Panc1 (cell line): ENCODE measurements at regions of chr9 and their contacts with region 1.

Region 1: GRCh38 chr9:107172160-107172978 is 110.7 kb upstream of the RAD23B start:
- DNase-seq: peak; percentile 60
- ATAC-seq: peak; percentile 97
- H3K4me3 ChIP-seq: no peak overlapping the region
- H3K27ac ChIP-seq: no peak overlapping the region
- H3K4me1 ChIP-seq: no peaks in the 10 kb centered on the region
- H3K27me3 ChIP-seq: no peaks in the 10 kb centered on the region
- CTCF ChIP-seq: peak; percentile 82

Region 2: GRCh38 chr9:105842023-105842644 is 1330.2 kb before region 1 on chr9:
- CTCF ChIA-PET with region 1: no interaction called
- POLR2A ChIA-PET with region 1: no interaction called
- in situ Hi-C with region 1: no loop called
- intact Hi-C with region 1: loop called (anchors 5 kb)
- DNase-seq: no peak
- ATAC-seq: no peak
- H3K4me3 ChIP-seq: no peak overlapping the region
- H3K27ac ChIP-seq: no peak overlapping the region
- H3K4me1 ChIP-seq: no peaks in the 10 kb centered on the region
- H3K27me3 ChIP-seq: no peaks in the 10 kb centered on the region
- CTCF ChIP-seq: peak; percentile 76; the same call in 1 of the 2 replicates

Region 3: GRCh38 chr9:106862825-106863720 is 309.3 kb before region 1 on chr9 and contains the start of gene ZNF462:
- CTCF ChIA-PET with region 1: no interaction called
- POLR2A ChIA-PET with region 1: no interaction called
- in situ Hi-C with region 1: no loop called
- intact Hi-C with region 1: loop called (anchors 10 kb)
- DNase-seq: no peak
- ATAC-seq: peak; percentile 19
- H3K4me3 ChIP-seq: peak within 1 kb of the TSS; percentile 82 to 90
- H3K27ac ChIP-seq: peak within 1 kb of the TSS; percentile 86
- H3K4me1 ChIP-seq: peaks cover 21% of the 10 kb centered on the region
- H3K27me3 ChIP-seq: no peaks in the 10 kb centered on the region
- CTCF ChIP-seq: no peak; the same call in 1 of the 2 replicates
- total RNA-seq, gene ZNF462: 34.8 TPM

Region 4: DNA sequence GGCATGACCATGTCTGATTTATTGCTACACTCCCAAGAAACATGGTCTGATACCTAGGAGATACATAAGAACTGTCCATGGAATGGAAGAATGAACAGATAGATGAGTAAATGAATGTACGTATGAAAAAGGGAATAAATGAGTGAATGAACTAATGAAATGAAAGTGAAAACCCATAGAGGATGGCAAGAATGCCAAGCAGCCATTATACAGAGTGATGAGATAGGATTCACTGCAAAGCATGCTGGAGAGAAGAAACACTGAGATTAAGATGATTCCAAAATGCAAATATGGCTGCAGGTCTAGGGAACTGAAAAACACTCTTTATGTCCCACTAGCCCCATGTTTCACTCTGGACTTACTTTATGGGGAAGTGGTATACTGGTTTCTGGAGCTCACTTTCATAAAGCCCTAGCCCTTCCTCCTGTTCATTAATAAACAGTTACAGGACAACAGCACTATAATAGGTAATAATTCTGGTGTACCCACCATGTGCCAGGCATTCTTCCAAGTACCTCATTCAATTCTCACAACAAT is 59.6 kb before region 1 on chr9:
- CTCF ChIA-PET with region 1: no interaction called
- POLR2A ChIA-PET with region 1: no interaction called
- in situ Hi-C with region 1: no loop called
- intact Hi-C with region 1: no loop called
- DNase-seq: no peak
- ATAC-seq: no peak
- H3K4me3 ChIP-seq: no peak overlapping the region
- H3K27ac ChIP-seq: no peak overlapping the region
- H3K4me1 ChIP-seq: no peaks in the 10 kb centered on the region; the same call in 1 of the 2 replicates
- H3K27me3 ChIP-seq: no peaks in the 10 kb centered on the region
- CTCF ChIP-seq: no peak